ENCODE measurements at regions of chr12 and their contacts with region 1.

Region 1: DNA sequence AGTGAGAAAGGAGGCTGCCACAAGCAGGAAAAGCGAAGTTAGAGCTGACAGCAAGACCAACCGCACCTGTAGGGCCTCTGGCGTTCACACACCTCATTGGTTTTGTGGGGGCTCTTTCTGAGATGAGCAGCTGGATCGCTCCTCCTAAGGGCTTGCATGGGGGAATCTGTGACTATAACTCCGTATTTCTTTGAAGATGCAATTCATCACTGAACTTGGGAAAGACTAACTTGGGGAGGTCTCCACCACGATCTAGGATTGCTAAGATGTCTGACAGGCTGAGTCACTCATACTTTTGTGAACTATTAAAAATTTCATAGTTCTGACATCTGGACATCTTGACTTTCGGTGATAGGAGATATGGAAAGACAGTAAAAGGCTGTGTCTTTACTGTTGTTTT is 173.6 kb downstream of the ETV6 start:
- DNase-seq: peak; percentile 40
- H3K4me3 ChIP-seq: no peak overlapping the region
- H3K27me3 ChIP-seq: no peaks in the 10 kb centered on the region
- CTCF ChIP-seq: no peak

Region 2: DNA sequence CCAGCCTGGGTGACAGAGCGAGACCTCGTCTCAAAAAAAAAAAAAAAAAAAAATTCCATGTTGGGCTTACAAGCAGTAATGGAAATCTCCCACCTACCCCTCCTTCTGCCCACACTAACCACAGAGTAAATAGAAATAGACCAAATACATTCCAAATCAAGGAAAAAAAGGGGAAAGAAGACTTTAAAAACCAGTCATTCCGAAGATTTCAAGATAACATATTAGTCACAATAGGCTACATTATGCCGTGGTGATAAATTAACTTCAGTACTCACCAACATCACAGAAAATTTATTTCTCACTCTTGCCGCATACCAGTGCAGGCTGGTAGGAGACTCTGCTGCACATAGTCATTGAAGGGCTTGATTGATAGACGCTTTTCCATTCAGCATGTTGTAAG is 189.1 kb before region 1 on chr12:
- CTCF ChIA-PET with region 1: no interaction called
- POLR2A ChIA-PET with region 1: interaction called, 11 read pairs
- DNase-seq: peak; percentile 46
- H3K4me3 ChIP-seq: no peak overlapping the region
- H3K27me3 ChIP-seq: no peaks in the 10 kb centered on the region
- CTCF ChIP-seq: no peak